Mucosa of descending colon (tissue), 3 donors: ENCODE measurements at regions of chr21 and their contacts with region 1.

Region 1: GRCh38 chr21:39313571-39314142 is at the start of gene BRWD1:
- DNase-seq: peak; percentile 85 to 89 (median 88)
- ATAC-seq: peak; percentile 86
- H3K4me3 ChIP-seq: peak within 1 kb of the TSS; percentile 65
- H3K4me1 ChIP-seq: peaks cover 19% of the 10 kb centered on the region
- CTCF ChIP-seq: no peak
- total RNA-seq, gene BRWD1: 40.6 to 58.6 (median 52.5) TPM

Region 2: GRCh38 chr21:38913120-38913892 is 400.4 kb before region 1 on chr21:
- intact Hi-C with region 1: no loop called
- DNase-seq: peak; percentile 92 to 94 (median 93)
- ATAC-seq: peak; percentile 79
- H3K4me3 ChIP-seq: no peak overlapping the region
- H3K4me1 ChIP-seq: peaks cover 56% of the 10 kb centered on the region
- CTCF ChIP-seq: no peak

Region 3: GRCh38 chr21:39183237-39184007 is 130.2 kb before region 1 on chr21 and contains the start of gene PSMG1:
- intact Hi-C with region 1: no loop called
- DNase-seq: peak; percentile 97 to 98 (median 98)
- ATAC-seq: peak; percentile 95
- H3K4me3 ChIP-seq: peak within 1 kb of the TSS; percentile 40
- H3K4me1 ChIP-seq: peaks cover 17% of the 10 kb centered on the region
- CTCF ChIP-seq: no peak
- total RNA-seq, gene PSMG1: 24.3 to 48.1 (median 36.2) TPM

Region 4: DNA sequence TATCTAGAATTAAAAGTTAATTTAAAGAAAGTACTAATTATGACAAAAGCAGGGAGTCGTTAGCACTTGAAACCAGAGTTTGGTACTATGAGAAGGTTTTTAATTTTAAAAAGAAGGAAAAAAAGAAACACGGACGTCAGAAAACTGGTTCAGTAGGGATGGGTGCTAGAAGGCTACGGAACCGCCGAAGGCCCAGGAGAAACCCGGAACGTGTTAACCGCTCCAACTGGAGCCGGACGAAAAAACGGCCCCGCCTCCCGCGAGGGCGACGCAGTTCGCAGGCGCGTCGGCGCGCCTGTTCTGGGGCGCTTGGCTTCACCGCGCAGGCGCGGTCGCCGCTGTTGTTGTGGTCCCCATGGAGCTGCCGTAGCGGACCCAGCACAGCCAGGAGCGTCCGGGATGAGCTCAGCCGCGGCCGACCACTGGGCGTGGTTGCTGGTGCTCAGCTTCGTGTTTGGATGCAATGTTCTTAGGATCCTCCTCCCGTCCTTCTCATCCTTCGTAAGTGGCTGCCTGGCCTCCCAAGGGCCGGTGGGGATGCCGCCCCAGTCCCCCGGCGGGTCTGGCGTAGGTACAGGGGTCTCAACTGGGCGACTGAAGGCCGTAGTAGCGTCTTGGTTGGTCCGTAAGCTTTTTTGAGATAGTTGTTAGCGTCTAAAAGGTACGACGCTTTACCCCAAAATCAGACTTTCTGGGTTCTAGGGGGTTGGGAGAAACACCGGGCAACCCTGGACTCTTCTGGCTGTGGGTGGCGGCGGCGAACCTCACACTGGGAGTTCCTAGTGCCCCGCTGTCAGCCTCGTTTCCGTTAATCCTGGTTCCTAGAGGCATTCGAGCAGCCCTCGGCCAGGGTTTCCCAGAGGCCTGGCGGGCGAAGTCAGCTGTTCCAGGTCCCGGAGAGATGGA is 66.6 kb after region 1 on chr21:
- intact Hi-C with region 1: loop called in 1 of 2 experiments (anchors 5 kb)
- DNase-seq: peak; percentile 92 to 96 (median 95)
- ATAC-seq: peak; percentile 99
- H3K4me3 ChIP-seq: peak overlapping the region; percentile 50
- H3K4me1 ChIP-seq: peaks cover 12% of the 10 kb centered on the region
- CTCF ChIP-seq: no peak